Activated CD4-positive, alpha-beta T cell treated with anti-CD3 and anti-CD28 coated beads for 36 hours (primary cell): ENCODE measurements at regions of chr1 and their contacts with region 1.

Region 1: GRCh38 chr1:1574721-1575537 is at the start of gene SSU72:
- DNase-seq: peak; percentile 97
- ATAC-seq: peak; percentile 84
- H3K4me3 Mint-ChIP-seq: peak within 1 kb of the TSS; percentile 99
- H3K27ac Mint-ChIP-seq: peak within 1 kb of the TSS; percentile 98
- H3K4me1 Mint-ChIP-seq: peaks cover 28% of the 10 kb centered on the region
- H3K27me3 Mint-ChIP-seq: no peaks in the 10 kb centered on the region
- total RNA-seq, gene SSU72: 105 to 123 TPM

Region 2: DNA sequence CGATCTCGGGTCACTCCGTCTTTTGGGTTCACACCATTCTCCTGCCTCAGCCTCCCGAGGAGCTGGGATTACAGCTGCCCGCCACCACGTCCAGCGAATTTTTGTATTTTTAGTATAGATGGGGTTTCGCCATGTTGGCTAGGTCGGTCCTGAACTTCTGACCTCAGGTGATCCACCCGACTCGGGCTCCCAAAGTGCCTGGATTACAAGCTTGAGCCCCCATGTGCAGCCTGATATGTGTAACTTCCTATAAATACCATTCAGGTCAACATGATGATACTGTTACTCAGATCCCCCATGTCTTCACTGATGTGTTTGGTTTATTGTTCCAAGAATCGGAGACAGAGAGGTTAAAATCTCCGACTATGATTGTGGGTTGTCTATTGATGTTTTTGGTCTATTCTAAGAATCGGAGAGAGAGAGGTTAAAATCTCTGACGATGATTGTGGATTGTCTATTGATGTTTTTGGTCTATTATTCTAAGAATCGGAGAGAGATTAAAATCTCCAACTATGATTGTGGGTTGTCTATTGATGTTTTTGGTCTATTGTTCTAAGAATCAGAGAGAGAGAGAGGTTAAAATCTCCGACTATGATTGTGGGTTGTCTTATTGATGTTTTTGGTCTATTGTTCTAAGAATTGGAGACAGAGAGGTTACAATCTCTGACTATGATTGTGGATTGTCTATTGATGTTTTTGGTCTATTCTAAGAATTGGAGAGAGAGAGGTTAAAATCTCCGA is 476.1 kb before region 1 on chr1:
- CTCF ChIA-PET with region 1: no interaction called
- POLR2A ChIA-PET with region 1: interaction called, 10 read pairs
- intact Hi-C with region 1: no loop called
- DNase-seq: no peak
- ATAC-seq: peak; percentile 74
- H3K4me3 Mint-ChIP-seq: no peak overlapping the region
- H3K27ac Mint-ChIP-seq: peak overlapping the region; percentile 64
- H3K4me1 Mint-ChIP-seq: peaks cover 23% of the 10 kb centered on the region
- H3K27me3 Mint-ChIP-seq: peaks cover 9% of the 10 kb centered on the region

Region 3: DNA sequence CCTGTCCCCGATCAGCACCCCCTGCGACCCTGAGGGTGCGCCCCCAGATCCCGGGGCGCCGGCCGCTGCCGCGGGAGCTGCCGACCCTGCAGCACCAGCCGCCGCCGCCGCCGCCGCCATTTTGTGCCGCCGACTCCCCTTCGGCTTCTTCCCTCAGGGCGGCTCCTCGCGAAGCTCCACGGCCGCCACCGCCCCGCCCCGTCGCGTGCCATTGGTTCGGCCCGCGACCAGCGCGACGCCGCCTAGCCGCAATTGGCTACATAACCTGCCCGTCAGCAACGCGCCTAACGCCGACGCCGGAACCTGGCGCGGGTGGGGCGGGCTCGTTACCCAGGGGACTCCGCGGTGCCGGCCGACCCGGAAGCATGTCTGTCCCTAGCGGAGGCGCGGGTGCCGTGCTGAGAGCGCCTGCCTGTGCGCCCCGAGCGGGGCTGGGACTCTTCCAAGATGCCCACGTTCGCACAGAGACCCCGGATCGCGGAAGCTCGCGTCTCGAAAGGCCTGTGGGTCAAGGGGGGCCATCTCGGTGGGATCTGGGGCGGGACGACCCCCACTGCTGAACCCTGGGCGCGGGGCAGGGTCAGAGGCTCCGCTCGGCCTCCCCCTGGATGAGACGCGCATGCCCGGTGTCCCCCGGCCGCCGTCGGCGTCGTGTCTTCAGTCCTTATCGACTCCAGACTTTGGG is 175.6 kb before region 1 on chr1 and contains the start of gene CCNL2:
- CTCF ChIA-PET with region 1: no interaction called
- POLR2A ChIA-PET with region 1: interaction called, 4 read pairs
- intact Hi-C with region 1: loop called in 1 of 2 experiments (anchors 1 kb)
- DNase-seq: peak; percentile 100
- ATAC-seq: peak; percentile 97
- H3K4me3 Mint-ChIP-seq: peak within 1 kb of the TSS; percentile 93
- H3K27ac Mint-ChIP-seq: peak within 1 kb of the TSS; percentile 91
- H3K4me1 Mint-ChIP-seq: peaks cover 52% of the 10 kb centered on the region
- H3K27me3 Mint-ChIP-seq: no peaks in the 10 kb centered on the region
- total RNA-seq, gene CCNL2: 73.6 to 89.7 TPM

Region 4: DNA sequence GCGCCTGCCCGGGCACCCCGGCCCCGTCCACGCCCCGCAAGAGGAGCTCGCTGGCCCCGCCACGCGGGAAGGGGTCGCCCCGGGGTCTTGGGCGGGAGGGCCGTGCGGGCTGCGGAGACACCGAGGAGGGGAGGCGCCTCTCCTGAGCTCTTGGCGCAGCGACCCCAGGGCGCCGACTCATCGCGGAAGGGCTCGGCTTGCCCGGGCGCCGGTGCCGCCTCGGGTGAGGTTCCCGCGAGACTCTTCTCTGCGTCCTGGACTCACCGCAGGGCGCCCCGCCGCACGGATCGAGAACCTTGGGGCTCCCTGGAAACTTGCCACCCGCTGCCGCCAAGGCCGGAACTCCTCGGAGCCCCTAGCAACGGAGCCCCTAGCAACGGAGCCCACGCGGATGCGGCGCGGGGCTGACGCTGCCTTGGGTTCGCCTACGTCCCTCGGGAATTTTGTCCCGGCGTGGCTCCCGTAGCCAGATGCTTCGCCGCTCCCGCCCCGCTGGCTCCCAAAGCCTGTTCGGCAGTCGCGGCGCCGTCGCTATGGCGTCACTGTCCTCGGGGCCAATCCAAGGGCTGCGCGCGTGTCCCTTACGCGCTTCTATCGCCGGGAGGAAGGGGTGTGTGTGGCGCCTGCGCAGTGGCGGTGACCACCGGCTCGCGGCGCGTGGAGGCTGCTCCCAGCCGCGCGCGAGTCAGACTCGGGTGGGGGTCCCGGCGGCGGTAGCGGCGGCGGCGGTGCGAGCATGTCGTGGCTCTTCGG is 63.2 kb before region 1 on chr1 and contains the start of gene ATAD3A:
- CTCF ChIA-PET with region 1: no interaction called
- POLR2A ChIA-PET with region 1: no interaction called
- intact Hi-C with region 1: loop called (anchors 1 to 2 kb)
- DNase-seq: peak; percentile 99
- ATAC-seq: peak; percentile 97
- H3K4me3 Mint-ChIP-seq: peak within 1 kb of the TSS; percentile 93
- H3K27ac Mint-ChIP-seq: peak within 1 kb of the TSS; percentile 97
- H3K4me1 Mint-ChIP-seq: peaks cover 7% of the 10 kb centered on the region
- H3K27me3 Mint-ChIP-seq: no peaks in the 10 kb centered on the region
- total RNA-seq, gene ATAD3A: 39.9 to 42.9 TPM

Region 5: DNA sequence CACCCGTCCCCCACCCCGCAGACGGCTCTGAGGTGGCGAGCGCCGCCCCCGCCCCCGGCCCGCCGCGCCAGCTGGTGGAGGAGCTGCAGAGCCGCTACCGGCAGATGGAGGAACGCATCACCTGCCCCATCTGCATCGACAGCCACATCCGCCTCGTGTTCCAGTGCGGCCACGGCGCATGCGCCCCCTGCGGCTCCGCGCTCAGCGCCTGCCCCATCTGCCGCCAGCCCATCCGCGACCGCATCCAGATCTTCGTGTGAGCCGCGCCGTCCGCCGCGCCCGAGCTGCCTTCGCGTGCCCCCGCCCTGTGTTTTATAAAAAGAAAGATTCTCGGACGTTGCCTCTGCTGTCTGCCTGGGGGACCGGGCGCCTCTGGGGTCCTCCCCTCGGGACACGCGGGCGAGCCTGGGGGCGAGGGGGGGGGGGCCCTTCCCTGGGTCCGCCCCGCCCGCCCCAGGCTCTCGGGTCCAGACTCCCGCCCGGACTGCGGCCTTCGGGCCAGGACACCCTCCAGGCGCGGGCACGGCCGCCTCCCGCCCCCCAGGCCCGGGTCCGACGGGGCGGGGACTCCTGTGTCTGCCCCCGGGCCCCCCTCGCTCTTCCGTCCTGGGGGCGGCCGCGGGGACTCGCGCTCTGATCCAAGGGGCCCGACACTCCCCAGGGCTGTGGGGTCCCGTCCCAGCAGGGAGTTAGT is 55.5 kb after region 1 on chr1:
- CTCF ChIA-PET with region 1: no interaction called
- POLR2A ChIA-PET with region 1: no interaction called
- intact Hi-C with region 1: loop called in 1 of 2 experiments (anchors 2 kb)
- DNase-seq: peak; percentile 96
- ATAC-seq: peak; percentile 81
- H3K4me3 Mint-ChIP-seq: peak overlapping the region; percentile 66
- H3K27ac Mint-ChIP-seq: peak overlapping the region; percentile 86
- H3K4me1 Mint-ChIP-seq: peaks cover 7% of the 10 kb centered on the region
- H3K27me3 Mint-ChIP-seq: peaks cover 4% of the 10 kb centered on the region

Region 6: GRCh38 chr1:1721201-1721600 is 146.3 kb after region 1 on chr1:
- CTCF ChIA-PET with region 1: no interaction called
- POLR2A ChIA-PET with region 1: no interaction called
- intact Hi-C with region 1: loop called in 1 of 2 experiments (anchors 1 kb)
- DNase-seq: no peak
- ATAC-seq: no peak
- H3K4me3 Mint-ChIP-seq: no peak overlapping the region
- H3K27ac Mint-ChIP-seq: peak overlapping the region; percentile 60
- H3K4me1 Mint-ChIP-seq: peaks cover 5% of the 10 kb centered on the region
- H3K27me3 Mint-ChIP-seq: no peaks in the 10 kb centered on the region

Region 7: DNA sequence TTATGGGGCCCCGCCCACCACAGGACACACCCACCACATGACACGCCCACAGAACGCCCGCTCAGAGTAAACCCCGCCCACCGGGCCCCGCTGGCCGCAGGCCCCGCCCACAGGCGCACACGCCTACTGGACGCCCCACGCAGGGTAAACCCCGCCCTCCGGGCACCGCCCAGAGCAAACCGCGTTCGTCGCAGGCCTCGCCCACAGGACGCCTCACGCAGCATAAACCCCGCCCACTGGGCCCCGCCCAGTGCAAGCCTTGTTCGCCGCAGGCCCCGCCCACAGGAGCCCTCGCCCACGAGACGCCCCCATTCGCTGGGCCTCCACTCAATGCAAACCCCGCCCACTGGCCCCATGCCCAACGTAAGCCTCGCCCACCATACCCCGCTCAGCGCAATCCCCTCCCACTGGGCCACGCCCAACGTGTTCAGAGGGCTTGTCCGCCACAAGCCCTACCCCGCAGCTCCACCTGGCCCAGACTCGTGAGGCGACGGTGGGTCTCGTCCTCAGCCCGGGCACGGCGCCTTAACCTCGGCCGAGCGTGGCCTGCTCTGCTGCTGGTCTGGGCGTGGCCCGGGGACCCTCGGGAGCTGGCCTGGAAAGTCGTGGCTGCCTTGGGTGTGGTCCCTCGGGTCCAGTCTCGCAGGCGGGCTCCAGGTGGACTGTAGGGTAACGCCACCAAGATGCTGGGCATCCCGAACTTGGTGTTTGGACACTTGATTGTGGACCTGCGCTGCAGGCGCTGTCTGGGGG is 344.6 kb after region 1 on chr1:
- CTCF ChIA-PET with region 1: no interaction called
- POLR2A ChIA-PET with region 1: no interaction called
- intact Hi-C with region 1: loop called in 1 of 2 experiments (anchors 1 kb)
- DNase-seq: peak; percentile 100
- ATAC-seq: peak; percentile 92
- H3K4me3 Mint-ChIP-seq: peak overlapping the region; percentile 62
- H3K27ac Mint-ChIP-seq: no peak overlapping the region
- H3K4me1 Mint-ChIP-seq: peaks cover 4% of the 10 kb centered on the region
- H3K27me3 Mint-ChIP-seq: no peaks in the 10 kb centered on the region